ENCODE measurements at regions of chr6 and their contacts with region 1.

Region 1: GRCh38 chr6:139291813-139292619 is at the start of gene TXLNB:
- DNase-seq: peak; percentile 91
- H3K4me3 Mint-ChIP-seq: peak within 1 kb of the TSS; percentile 79
- H3K27ac Mint-ChIP-seq: peak within 1 kb of the TSS; percentile 95
- H3K4me1 Mint-ChIP-seq: peaks cover 67% of the 10 kb centered on the region
- H3K27me3 Mint-ChIP-seq: no peaks in the 10 kb centered on the region
- total RNA-seq, gene TXLNB: 0.10 to 0.14 TPM

Region 2: GRCh38 chr6:138588805-138589434 is 703.1 kb before region 1 on chr6:
- CTCF ChIA-PET with region 1: no interaction called
- intact Hi-C with region 1: loop called (anchors 1 kb)
- DNase-seq: peak; percentile 73
- H3K4me3 Mint-ChIP-seq: no peak overlapping the region
- H3K27ac Mint-ChIP-seq: no peak overlapping the region
- H3K4me1 Mint-ChIP-seq: peaks cover 29% of the 10 kb centered on the region
- H3K27me3 Mint-ChIP-seq: no peaks in the 10 kb centered on the region

Region 3: DNA sequence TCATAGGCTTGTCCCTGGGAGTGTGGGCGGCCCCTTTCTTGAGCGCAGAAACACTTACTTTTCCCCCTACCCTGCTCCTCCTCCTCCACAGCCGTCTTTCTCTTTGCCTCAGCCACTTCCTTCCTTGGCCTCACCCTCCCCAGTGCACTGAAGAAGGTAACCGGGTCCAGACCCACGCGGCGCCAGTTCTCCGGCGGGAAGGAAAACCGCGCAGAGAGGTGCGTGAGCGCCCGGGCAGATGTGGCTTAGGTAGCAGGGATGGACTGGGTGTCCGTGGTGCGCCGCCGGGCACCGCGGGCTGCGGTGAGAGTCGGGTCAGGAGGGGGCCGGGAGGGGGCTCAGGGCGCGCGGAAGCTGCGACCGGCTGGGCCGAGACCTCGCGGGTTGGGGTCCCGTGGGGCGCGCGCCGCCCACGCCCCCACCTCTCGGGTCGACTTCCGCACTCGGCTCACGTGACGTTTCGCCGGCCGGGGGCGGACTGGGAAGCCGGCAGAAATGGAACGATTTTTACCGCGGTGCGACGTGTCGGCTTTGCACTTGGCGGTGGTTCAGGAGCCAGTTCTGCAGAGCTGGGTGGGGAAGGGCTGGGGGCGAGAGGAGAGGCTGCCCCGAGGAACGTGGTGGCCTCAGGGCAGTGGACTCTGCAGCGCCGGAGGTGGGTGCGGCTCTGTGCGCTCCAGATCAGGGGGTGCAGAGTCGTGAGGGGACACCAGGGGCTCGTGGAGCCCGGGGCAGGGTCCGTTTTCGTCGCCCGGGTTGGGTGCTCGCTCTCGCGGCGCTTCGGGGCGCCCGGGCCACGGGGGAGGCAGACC is 263.2 kb before region 1 on chr6 and contains the start of gene ABRACL:
- CTCF ChIA-PET with region 1: no interaction called
- intact Hi-C with region 1: loop called (anchors 2 kb)
- DNase-seq: peak; percentile 92
- H3K4me3 Mint-ChIP-seq: no peak within 1 kb of the TSS
- H3K27ac Mint-ChIP-seq: peak within 1 kb of the TSS; percentile 95
- H3K4me1 Mint-ChIP-seq: peaks cover 18% of the 10 kb centered on the region
- H3K27me3 Mint-ChIP-seq: no peaks in the 10 kb centered on the region
- total RNA-seq, gene ABRACL: 185 to 190 TPM

Region 4: DNA sequence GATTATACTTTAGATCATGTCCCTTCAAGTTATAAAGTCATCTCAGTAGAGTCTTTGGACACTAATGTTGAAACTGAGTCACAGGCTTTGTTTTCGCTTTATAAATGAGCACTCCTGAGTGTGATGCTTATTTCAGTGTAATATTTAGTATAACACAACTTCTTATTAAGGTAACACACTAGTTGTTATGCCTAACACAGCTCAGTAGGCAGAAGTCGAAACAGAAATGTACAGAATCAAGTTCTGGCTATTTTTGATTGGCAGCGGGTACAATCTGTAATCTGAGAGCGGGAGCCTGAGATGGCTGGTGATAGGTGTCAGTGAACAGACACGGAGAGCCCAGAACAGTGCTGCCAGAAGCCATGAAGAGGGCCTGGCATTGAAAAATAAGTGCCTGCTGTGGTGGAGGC is 145.7 kb before region 1 on chr6:
- CTCF ChIA-PET with region 1: no interaction called
- intact Hi-C with region 1: loop called (anchors 1 kb)
- DNase-seq: no peak
- H3K4me3 Mint-ChIP-seq: peak overlapping the region; percentile 61
- H3K27ac Mint-ChIP-seq: peak overlapping the region; percentile 95
- H3K4me1 Mint-ChIP-seq: peaks cover 91% of the 10 kb centered on the region
- H3K27me3 Mint-ChIP-seq: no peaks in the 10 kb centered on the region

Region 5: DNA sequence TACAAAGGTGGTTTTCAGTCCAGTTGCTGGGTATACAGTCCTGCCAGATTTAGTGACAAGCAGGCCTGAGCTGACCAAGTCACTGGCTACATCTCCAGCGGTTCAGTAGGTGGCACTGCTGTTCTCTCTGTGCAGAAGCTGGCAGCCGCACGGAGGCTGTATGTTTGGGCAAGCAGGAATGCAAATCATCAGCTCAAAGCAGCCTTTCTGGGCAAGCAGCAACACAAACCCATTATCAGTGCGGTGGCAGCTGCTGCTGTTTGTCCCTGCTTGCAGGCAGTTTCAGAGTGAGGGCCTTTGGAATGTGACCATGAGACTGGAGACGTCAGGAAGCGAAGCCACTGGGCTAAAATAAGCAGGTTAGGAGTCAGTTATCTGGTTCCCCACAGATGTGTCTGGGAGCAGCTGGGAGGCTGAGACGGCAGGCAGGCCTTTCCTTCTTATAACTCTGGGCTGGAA is 72.7 kb before region 1 on chr6:
- CTCF ChIA-PET with region 1: interaction called, 5 read pairs
- intact Hi-C with region 1: loop called (anchors 1 kb)
- DNase-seq: peak; percentile 87
- H3K4me3 Mint-ChIP-seq: peak overlapping the region; percentile 5
- H3K27ac Mint-ChIP-seq: no peak overlapping the region
- H3K4me1 Mint-ChIP-seq: peaks cover 9% of the 10 kb centered on the region
- H3K27me3 Mint-ChIP-seq: no peaks in the 10 kb centered on the region

Region 6: GRCh38 chr6:139308286-139308916 is 16.4 kb after region 1 on chr6:
- CTCF ChIA-PET with region 1: interaction called, 4 read pairs
- intact Hi-C with region 1: loop called (anchors 1 kb)
- DNase-seq: no peak
- H3K4me3 Mint-ChIP-seq: no peak overlapping the region
- H3K27ac Mint-ChIP-seq: peak overlapping the region; percentile 82
- H3K4me1 Mint-ChIP-seq: peaks cover 25% of the 10 kb centered on the region
- H3K27me3 Mint-ChIP-seq: no peaks in the 10 kb centered on the region

Region 7: DNA sequence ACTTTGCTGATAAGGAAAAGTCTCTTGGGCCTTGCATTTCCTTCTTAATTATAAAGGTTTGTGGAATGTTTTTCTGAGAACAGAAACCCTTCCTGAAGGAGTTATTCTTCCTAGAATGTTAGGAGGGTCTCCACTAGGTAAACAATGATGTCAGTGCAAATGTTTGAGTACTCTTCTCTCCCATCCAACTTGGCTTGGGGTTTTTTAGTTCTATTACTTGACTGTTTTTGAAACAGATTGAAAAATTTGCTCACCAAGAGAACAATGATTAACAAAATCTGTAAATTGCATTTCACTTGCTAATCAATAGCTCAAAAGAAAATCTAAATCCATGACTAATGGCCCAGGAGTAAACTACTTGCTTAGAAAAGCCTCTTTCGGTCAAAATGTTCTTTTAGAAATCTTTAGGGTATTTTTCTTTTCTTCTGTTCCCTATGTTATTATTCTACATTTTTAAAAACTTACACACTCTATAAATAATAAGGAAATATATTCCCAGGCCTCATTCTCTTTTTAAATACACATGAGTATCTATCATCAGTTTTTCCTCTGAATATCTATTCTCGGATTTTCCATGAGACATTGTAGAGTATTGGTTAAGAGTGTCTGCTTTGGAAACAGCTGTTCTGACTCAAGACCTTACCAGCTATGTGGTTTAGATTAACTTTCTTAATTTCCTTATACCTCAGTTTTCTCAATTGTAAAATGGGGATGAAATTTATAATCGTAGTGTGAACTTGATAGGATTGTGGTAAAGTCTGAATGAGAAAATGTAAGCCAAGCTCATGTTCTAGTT is 316.6 kb after region 1 on chr6:
- CTCF ChIA-PET with region 1: no interaction called
- intact Hi-C with region 1: no loop called
- DNase-seq: no peak
- H3K4me3 Mint-ChIP-seq: no peak overlapping the region
- H3K27ac Mint-ChIP-seq: no peak overlapping the region
- H3K4me1 Mint-ChIP-seq: no peaks in the 10 kb centered on the region
- H3K27me3 Mint-ChIP-seq: peaks cover 3% of the 10 kb centered on the region